BJ (cell line): ENCODE measurements at regions of chr1 and their contacts with region 1.

Region 1: GRCh38 chr1:211514030-211514754 is 22.2 kb upstream of the RD3 start:
- DNase-seq: peak; percentile 25
- H3K4me3 ChIP-seq: no peak overlapping the region
- H3K27me3 ChIP-seq: peaks cover 1% of the 10 kb centered on the region; the same call in 1 of the 2 replicates
- CTCF ChIP-seq: peak; percentile 85

Region 2: GRCh38 chr1:211229365-211229759 is 284.8 kb before region 1 on chr1:
- CTCF ChIA-PET with region 1: no interaction called
- POLR2A ChIA-PET with region 1: no interaction called
- DNase-seq: no peak
- H3K4me3 ChIP-seq: no peak overlapping the region
- H3K27me3 ChIP-seq: no peaks in the 10 kb centered on the region
- CTCF ChIP-seq: no peak

Region 3: GRCh38 chr1:211323156-211324063 is 190.8 kb before region 1 on chr1:
- CTCF ChIA-PET with region 1: interaction called, 28 read pairs
- POLR2A ChIA-PET with region 1: no interaction called
- DNase-seq: no peak
- H3K4me3 ChIP-seq: no peak overlapping the region
- H3K27me3 ChIP-seq: no peaks in the 10 kb centered on the region
- CTCF ChIP-seq: peak; percentile 88

Region 4: DNA sequence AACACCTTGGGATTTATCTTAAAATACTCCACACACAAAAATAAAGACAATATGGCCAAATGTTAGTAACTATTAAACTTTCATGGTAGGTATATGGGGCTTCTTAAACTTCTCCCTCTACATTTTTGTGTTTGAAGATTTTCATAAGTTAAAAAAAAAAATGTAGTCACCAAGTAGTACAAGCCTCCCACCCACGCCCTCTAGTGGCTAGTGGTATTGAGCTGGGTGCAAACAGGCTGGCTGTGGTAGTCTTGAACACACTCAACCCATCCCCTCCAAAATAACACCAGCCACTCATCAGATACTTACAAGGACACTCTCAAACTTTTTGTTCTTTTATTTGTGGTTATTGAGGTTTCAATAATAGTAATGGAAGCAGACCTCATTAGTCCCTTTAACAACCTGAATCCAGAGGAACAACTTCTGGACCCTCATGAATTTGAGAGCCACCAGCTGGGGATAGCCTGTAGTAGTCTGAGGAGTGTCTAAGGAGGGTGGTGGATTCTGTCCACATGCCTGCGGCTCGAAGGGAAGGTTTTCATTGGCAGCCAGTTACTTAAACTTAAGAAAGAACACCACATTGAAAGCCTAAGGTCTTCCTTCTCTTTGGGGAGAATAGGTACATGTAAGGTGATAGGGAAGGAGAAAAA is 37.9 kb before region 1 on chr1:
- CTCF ChIA-PET with region 1: interaction called, 15 read pairs
- POLR2A ChIA-PET with region 1: no interaction called
- DNase-seq: no peak
- H3K4me3 ChIP-seq: no peak overlapping the region
- H3K27me3 ChIP-seq: peaks cover 9% of the 10 kb centered on the region
- CTCF ChIP-seq: peak; percentile 95

Region 5: DNA sequence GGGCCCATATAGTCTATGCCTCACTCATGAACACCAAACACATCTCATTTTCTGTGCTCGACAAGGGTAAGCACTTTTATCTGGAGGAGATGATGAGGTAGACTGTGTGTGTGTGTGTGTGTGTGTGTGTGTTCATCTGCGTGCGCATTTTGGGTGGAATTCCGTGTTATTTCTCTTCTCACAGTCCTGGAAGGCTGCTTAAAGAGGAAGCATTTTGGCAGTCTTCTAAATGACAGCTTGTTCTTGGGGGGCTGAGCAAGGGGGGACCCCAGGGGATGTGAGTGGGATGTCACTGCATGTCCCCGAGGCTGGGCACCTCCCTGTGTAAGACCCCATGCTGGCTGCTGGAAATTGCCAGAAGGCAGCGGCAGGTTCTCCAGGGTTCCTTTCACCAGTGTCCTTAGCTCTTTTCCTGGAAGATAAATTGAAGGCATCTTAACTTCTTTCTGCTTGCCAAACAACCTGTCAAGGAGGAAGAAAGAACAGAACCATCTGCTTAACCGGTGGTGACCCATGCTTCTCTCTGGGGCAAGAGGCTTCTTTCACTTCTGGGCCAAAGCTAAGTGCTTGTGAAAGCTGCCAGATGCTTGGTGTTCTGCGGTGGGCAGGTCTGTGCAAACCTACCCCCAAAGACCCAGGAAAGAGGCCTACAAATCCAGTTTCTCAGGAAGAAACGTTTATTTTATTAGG is 12.3 kb before region 1 on chr1:
- CTCF ChIA-PET with region 1: interaction called, 62 read pairs
- POLR2A ChIA-PET with region 1: no interaction called
- DNase-seq: no peak
- H3K4me3 ChIP-seq: no peak overlapping the region
- H3K27me3 ChIP-seq: peaks cover 10% of the 10 kb centered on the region
- CTCF ChIP-seq: no peak

Region 6: GRCh38 chr1:211632631-211633523 is 118.7 kb after region 1 on chr1:
- CTCF ChIA-PET with region 1: no interaction called
- POLR2A ChIA-PET with region 1: no interaction called
- DNase-seq: no peak
- H3K4me3 ChIP-seq: no peak overlapping the region
- H3K27me3 ChIP-seq: no peaks in the 10 kb centered on the region
- CTCF ChIP-seq: no peak

Region 7: GRCh38 chr1:211654838-211655787 is 140.9 kb after region 1 on chr1:
- CTCF ChIA-PET with region 1: interaction called, 113 read pairs
- POLR2A ChIA-PET with region 1: no interaction called
- DNase-seq: no peak
- H3K4me3 ChIP-seq: no peak overlapping the region
- H3K27me3 ChIP-seq: no peaks in the 10 kb centered on the region
- CTCF ChIP-seq: peak; percentile 96